Heart right ventricle (tissue), 16 donors: ENCODE measurements at regions of chr13 and their contacts with region 1.

Region 1: GRCh38 chr13:75489502-75490263 is 7.7 kb upstream of the TBC1D4 start:
- DNase-seq: no peak
- ATAC-seq: no peak
- H3K4me3 ChIP-seq: no peak overlapping the region
- H3K27ac ChIP-seq: no peak overlapping the region
- H3K4me1 ChIP-seq: peaks cover 0 to 11% (median 0%) of the 10 kb centered on the region in 9 donors
- H3K27me3 ChIP-seq: peaks cover 0 to 5% (median 0%) of the 10 kb centered on the region in 7 donors
- CTCF ChIP-seq: no peak

Region 2: GRCh38 chr13:75308222-75308621 is 181.5 kb before region 1 on chr13:
- intact Hi-C with region 1: loop called in 2 of 10 experiments (anchors 5 to 10 kb)
- DNase-seq: no peak
- ATAC-seq: no peak
- H3K4me3 ChIP-seq: no peak overlapping the region
- H3K27ac ChIP-seq: no peak overlapping the region
- H3K4me1 ChIP-seq: peaks cover 0 to 32% (median 13%) of the 10 kb centered on the region in 9 donors
- H3K27me3 ChIP-seq: no peaks in the 10 kb centered on the region
- CTCF ChIP-seq: no peak

Region 3: GRCh38 chr13:75395066-75395465 is 94.6 kb before region 1 on chr13:
- intact Hi-C with region 1: no loop called
- DNase-seq: no peak
- ATAC-seq: peak in 1 of 8 donors; percentile 36
- H3K4me3 ChIP-seq: no peak overlapping the region
- H3K27ac ChIP-seq: peak overlapping the region in 3 of 10 donors; percentile 9 to 38 (median 15)
- H3K4me1 ChIP-seq: peaks cover 0 to 42% (median 11%) of the 10 kb centered on the region in 9 donors
- H3K27me3 ChIP-seq: no peaks in the 10 kb centered on the region
- CTCF ChIP-seq: no peak

Region 4: DNA sequence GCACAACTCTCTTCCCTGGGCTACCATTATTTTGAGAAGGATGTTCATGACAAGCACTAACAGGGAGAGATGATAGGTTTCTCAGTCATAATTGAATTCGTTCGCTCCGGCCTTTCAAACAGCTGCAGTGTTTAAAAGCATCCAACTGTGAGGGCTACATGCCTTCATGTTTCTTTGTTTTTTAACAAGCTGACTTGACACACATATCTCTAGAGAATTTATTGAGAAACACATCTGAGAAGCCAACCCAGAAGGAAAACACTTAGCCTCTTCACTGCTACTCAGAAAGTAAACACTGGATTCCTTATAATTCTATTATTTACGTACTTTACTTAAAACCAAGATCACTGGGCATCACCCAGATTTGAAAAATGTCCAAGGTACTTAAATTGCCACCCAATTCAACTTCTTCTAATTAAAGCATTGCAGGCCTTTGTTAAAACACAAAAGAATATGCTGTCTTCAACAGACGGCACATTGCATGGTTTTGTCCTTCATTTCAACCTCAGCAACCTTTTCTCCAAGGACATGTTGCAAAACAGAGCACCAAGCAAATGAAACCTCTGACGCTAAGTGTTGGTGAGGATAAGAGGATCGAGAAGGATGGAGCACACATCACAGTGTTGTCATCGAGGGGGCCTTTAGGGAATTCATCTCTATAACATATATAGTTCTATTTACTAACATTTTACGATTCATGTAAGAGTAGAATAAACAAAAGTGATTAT is 83.5 kb before region 1 on chr13:
- intact Hi-C with region 1: no loop called
- DNase-seq: no peak
- ATAC-seq: peak in 6 of 8 donors; percentile 22 to 72 (median 44)
- H3K4me3 ChIP-seq: no peak overlapping the region
- H3K27ac ChIP-seq: peak overlapping the region; percentile 0 to 81 (median 66)
- H3K4me1 ChIP-seq: peaks cover 0 to 58% (median 38%) of the 10 kb centered on the region in 9 donors
- H3K27me3 ChIP-seq: no peaks in the 10 kb centered on the region
- CTCF ChIP-seq: no peak